ENCODE measurements at regions of chr5 and their contacts with region 1.

Region 1: GRCh38 chr5:83337453-83338035 is 134.0 kb upstream of the VCAN start:
- DNase-seq: no peak
- CTCF ChIP-seq: no peak

Region 2: GRCh38 chr5:83133797-83134196 is 203.7 kb before region 1 on chr5:
- CTCF ChIA-PET with region 1: no interaction called
- POLR2A ChIA-PET with region 1: no interaction called
- DNase-seq: no peak
- CTCF ChIP-seq: no peak

Region 3: DNA sequence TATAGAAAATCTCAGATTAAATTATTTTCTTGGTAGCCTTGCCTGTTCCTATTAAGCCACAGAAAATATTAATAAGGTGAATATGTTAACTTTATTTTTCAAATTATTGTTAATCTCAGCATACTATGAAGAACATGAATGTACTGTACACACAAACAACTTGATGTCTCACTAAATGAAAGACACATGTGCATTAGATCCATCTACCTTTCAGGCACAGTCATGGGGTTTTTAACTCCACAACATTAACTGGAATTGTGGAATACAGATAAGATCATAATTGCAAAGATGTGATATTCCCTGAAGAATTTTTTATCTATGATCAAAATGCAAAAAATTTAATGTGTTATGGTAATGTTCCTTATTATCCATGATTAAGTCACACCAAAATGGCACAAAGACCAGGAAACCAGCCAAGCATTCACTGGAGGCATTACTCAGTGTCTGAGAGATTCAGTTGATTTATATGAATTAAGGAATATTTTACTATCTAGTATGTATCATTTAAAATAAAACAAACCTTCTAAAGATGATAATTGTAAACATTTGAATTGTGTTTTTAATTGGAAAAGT is 16.0 kb before region 1 on chr5:
- CTCF ChIA-PET with region 1: interaction called, 10 read pairs
- POLR2A ChIA-PET with region 1: no interaction called
- DNase-seq: no peak
- CTCF ChIP-seq: no peak

Measured in GM10248 (cell line).